Mammary epithelial cell (primary cell): ENCODE measurements at regions of chr5 and their contacts with region 1.

Region 1: DNA sequence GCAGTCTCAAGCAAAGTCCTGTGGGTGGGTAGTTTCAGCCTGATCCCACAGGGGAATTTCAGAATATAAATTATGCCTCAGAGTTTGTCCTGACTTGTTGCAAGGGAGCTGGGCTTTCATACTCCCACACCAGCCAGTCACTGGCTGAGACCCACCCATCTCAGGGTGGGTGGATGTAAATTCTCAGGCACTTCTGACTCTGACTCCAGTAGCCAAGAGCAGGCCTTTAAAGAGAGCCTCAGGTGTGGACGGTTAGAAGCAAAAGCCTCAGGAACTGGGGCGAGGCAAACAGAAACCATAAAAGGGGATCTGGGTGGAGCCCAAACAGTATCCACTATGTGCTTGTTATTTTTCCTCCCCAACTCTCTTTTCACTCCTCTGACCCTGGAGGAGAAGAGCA is 28.6 kb upstream of the FBXW11 start:
- DNase-seq: peak; percentile 83
- H3K4me3 ChIP-seq: no peak overlapping the region
- H3K27ac ChIP-seq: no peak overlapping the region
- H3K4me1 ChIP-seq: peaks cover 10% of the 10 kb centered on the region
- H3K27me3 ChIP-seq: no peaks in the 10 kb centered on the region
- CTCF ChIP-seq: no peak

Region 2: GRCh38 chr5:171418316-171418981 is 616.6 kb before region 1 on chr5:
- CTCF ChIA-PET with region 1: no interaction called
- dilution Hi-C with region 1: no loop called
- in situ Hi-C with region 1: loop called in 1 of 2 experiments (anchors 25 kb)
- intact Hi-C with region 1: loop called (anchors 5 kb)
- DNase-seq: peak; percentile 70
- H3K4me3 ChIP-seq: peak overlapping the region in 1 of 3 experiments; percentile 31
- H3K27ac ChIP-seq: no peak overlapping the region
- H3K4me1 ChIP-seq: peaks cover 15% of the 10 kb centered on the region
- H3K27me3 ChIP-seq: peaks cover 8% of the 10 kb centered on the region
- CTCF ChIP-seq: peak; percentile 77 to 89

Region 3: DNA sequence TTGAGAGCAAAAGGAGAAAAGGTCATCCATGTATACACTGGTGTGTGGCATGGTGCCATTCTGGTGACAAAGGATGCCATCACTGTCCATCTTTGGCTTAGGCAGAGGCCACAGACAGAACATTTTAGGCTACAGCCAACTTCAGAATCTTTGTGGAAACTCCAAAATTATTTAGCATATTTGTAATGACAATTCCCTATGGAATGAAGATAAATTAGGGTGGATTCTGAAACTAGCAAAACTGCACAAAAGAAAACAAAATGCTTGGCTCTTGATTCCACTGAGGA is 121.1 kb before region 1 on chr5:
- CTCF ChIA-PET with region 1: no interaction called
- dilution Hi-C with region 1: no loop called
- in situ Hi-C with region 1: loop called (anchors 5 to 10 kb)
- intact Hi-C with region 1: loop called (anchors 1 kb)
- DNase-seq: no peak
- H3K4me3 ChIP-seq: no peak overlapping the region
- H3K27ac ChIP-seq: no peak overlapping the region
- H3K4me1 ChIP-seq: no peaks in the 10 kb centered on the region
- H3K27me3 ChIP-seq: no peaks in the 10 kb centered on the region
- CTCF ChIP-seq: no peak

Region 4: DNA sequence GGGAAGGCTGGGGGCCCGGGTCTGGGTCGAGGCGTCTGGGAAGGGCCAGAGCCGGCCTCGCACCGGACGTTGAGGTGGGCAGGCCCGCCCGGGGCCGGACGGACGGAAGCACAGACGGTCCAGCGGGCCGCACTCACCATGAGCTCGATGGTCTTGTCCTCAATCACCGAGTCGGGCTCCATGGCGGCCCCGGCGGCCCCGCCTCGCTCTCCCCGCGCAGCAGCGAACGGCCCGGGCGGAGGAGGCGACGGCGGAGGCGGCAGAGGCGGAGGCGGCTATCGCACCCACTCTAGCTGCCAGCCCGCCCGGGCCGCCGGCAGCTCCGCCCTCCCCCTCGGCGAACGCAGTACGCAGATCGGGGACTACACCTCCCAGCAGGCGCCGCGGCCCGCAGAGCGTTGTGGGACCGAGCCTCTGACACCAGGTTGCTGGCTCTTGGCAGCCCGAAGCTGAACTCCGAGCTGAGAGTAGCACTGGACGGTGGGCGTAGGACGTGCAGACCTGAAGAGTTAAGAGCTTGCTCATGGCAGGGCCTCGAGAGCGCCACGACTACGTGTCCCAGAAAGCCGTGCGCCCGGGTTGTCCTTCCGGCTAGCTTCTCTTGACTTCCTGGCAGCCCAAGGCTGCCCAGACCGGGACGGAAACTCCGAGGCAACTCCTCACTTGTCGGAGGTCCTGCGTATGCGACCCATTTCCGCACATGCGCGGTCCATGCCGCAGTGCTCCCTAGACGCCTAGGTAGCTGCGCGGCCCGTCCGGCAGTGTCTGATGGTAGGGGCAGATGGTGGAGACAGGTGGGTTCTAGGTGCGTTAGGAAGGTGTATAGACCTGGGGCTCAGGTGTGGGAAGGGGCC is 28.5 kb before region 1 on chr5 and contains the start of gene FBXW11:
- CTCF ChIA-PET with region 1: interaction called, 4 read pairs
- dilution Hi-C with region 1: no loop called
- in situ Hi-C with region 1: no loop called
- intact Hi-C with region 1: loop called (anchors 1 kb)
- DNase-seq: peak; percentile 97
- H3K4me3 ChIP-seq: peak within 1 kb of the TSS; percentile 73 to 98 (median 77)
- H3K27ac ChIP-seq: peak within 1 kb of the TSS; percentile 88
- H3K4me1 ChIP-seq: peaks cover 54% of the 10 kb centered on the region
- H3K27me3 ChIP-seq: no peaks in the 10 kb centered on the region
- CTCF ChIP-seq: no peak
- total RNA-seq, gene FBXW11: 39.2 to 62.0 TPM

Region 5: GRCh38 chr5:172065501-172065990 is 30.5 kb after region 1 on chr5:
- CTCF ChIA-PET with region 1: interaction called, 10 read pairs
- dilution Hi-C with region 1: no loop called
- in situ Hi-C with region 1: no loop called
- intact Hi-C with region 1: no loop called
- DNase-seq: peak; percentile 34
- H3K4me3 ChIP-seq: no peak overlapping the region
- H3K27ac ChIP-seq: no peak overlapping the region
- H3K4me1 ChIP-seq: peaks cover 7% of the 10 kb centered on the region
- H3K27me3 ChIP-seq: no peaks in the 10 kb centered on the region
- CTCF ChIP-seq: no peak

Region 6: GRCh38 chr5:172194985-172195774 is 160.1 kb after region 1 on chr5:
- CTCF ChIA-PET with region 1: no interaction called
- dilution Hi-C with region 1: no loop called
- in situ Hi-C with region 1: no loop called
- intact Hi-C with region 1: no loop called
- DNase-seq: no peak
- H3K4me3 ChIP-seq: no peak overlapping the region
- H3K27ac ChIP-seq: no peak overlapping the region
- H3K4me1 ChIP-seq: no peaks in the 10 kb centered on the region
- H3K27me3 ChIP-seq: no peaks in the 10 kb centered on the region
- CTCF ChIP-seq: no peak

Region 7: GRCh38 chr5:172412724-172413286 is 377.8 kb after region 1 on chr5:
- CTCF ChIA-PET with region 1: no interaction called
- dilution Hi-C with region 1: no loop called
- in situ Hi-C with region 1: no loop called
- intact Hi-C with region 1: no loop called
- DNase-seq: peak; percentile 45
- H3K4me3 ChIP-seq: no peak overlapping the region
- H3K27ac ChIP-seq: no peak overlapping the region
- H3K4me1 ChIP-seq: peaks cover 18% of the 10 kb centered on the region
- H3K27me3 ChIP-seq: no peaks in the 10 kb centered on the region
- CTCF ChIP-seq: no peak